BJ (cell line): ENCODE measurements at regions of chrX and their contacts with region 1.

Region 1: DNA sequence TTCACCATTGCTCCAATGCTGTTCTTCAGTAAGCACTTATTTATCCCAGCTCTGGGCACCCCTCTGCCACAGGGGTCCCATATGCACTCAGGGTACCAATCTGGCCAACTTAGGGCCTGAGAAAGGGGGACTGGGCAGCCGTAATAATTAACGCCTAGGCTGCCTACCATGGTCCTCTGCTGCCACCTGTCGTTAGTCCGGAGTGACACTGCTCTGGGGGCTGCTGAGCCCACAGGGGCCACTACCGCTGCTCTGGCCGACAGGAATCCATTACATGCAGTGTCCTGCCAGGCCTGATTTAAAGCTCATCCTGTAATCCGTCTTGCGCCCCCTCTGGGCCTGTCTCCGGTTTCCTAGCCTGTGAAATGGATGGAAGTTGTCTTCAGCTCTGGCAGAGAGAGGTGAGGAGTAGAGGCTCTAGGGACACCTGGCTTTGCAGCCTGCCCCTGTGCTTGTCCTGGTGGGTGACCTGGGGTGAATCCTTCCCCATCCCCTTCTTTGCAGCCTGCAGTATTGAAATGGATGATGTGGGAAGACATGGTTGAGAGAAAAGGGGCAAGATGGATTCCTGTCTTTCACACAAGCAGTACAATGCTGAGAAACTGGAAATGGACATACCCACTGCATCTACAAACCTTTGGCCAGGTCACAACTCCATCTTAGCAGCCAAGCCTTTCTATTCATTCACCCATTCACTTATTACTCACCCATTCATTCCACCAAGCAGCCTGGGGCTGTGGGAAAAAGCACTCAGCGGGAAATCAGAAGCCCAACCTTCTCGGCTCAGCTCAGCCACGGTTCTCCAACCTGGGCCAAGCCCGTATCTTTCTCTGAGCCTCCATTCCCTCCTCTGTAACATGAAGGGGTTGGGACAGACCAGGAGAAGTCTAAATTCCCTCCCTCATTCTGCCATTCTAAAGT is 116.3 kb upstream of the NALF2 start:
- DNase-seq: no peak
- H3K4me3 ChIP-seq: no peak overlapping the region
- H3K27me3 ChIP-seq: peaks cover 1% of the 10 kb centered on the region
- CTCF ChIP-seq: peak; percentile 72

Region 2: GRCh38 chrX:68822641-68823410 is 565.0 kb before region 1 on chrX:
- CTCF ChIA-PET with region 1: interaction called, 33 read pairs
- POLR2A ChIA-PET with region 1: no interaction called
- DNase-seq: no peak
- H3K4me3 ChIP-seq: no peak overlapping the region
- H3K27me3 ChIP-seq: no peaks in the 10 kb centered on the region
- CTCF ChIP-seq: peak; percentile 61

Region 3: GRCh38 chrX:68828740-68829552 is 558.9 kb before region 1 on chrX and contains the start of gene EFNB1:
- CTCF ChIA-PET with region 1: interaction called, 33 read pairs
- POLR2A ChIA-PET with region 1: no interaction called
- DNase-seq: peak; percentile 78
- H3K4me3 ChIP-seq: peak within 1 kb of the TSS; percentile 68
- H3K27me3 ChIP-seq: no peaks in the 10 kb centered on the region
- CTCF ChIP-seq: no peak
- polyA plus RNA-seq, gene EFNB1: 10.8 and 15.2 TPM in 2 replicates

Region 4: DNA sequence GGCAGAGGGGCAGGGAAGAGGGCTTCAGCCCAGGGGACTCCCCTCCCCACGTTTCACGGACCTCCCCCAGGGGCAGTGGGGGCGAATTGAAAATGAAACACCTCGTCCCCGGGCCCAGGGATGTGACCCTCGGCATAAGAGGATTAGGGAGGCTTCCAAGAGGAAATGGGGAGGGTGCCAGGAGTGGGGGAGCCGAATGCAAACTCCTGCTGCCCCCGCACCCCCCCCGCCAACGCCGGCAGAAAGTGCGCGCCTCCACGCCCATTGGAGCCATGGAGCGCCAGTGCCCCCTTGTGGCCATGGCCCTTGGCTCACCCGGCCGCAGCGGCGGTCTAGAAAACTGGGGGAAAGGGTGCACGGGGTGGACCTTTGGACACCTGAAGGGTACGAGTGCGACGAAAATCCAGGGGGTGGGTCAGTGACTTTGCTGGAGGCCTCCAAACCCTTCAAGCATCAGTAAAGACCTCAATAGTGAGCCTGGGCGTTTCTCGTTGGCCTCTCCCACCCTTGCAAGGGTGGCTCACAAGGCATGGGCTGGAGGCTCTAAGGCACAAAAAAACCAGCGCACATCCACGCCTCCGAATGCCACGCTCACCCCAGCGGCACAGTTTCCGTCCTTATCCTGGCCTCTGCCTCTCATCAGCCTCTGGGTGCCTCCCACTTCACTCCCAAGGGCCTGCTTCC is 101.8 kb before region 1 on chrX:
- CTCF ChIA-PET with region 1: interaction called, 28 read pairs
- POLR2A ChIA-PET with region 1: no interaction called
- DNase-seq: no peak
- H3K4me3 ChIP-seq: peak overlapping the region; percentile 37
- H3K27me3 ChIP-seq: no peaks in the 10 kb centered on the region
- CTCF ChIP-seq: peak; percentile 88

Region 5: GRCh38 chrX:69362856-69363255 is 25.0 kb before region 1 on chrX:
- CTCF ChIA-PET with region 1: interaction called, 18 read pairs
- POLR2A ChIA-PET with region 1: no interaction called
- DNase-seq: peak; percentile 18
- H3K4me3 ChIP-seq: no peak overlapping the region
- H3K27me3 ChIP-seq: no peaks in the 10 kb centered on the region
- CTCF ChIP-seq: no peak

Region 6: GRCh38 chrX:69374569-69374968 is 13.3 kb before region 1 on chrX:
- CTCF ChIA-PET with region 1: interaction called, 16 read pairs
- POLR2A ChIA-PET with region 1: no interaction called
- DNase-seq: no peak
- H3K4me3 ChIP-seq: no peak overlapping the region
- H3K27me3 ChIP-seq: no peaks in the 10 kb centered on the region
- CTCF ChIP-seq: no peak

Region 7: GRCh38 chrX:69615779-69616456 is 228.1 kb after region 1 on chrX and contains the start of gene EDA:
- CTCF ChIA-PET with region 1: no interaction called
- POLR2A ChIA-PET with region 1: no interaction called
- DNase-seq: no peak
- H3K4me3 ChIP-seq: peak within 1 kb of the TSS; percentile 43
- H3K27me3 ChIP-seq: peaks cover 6% of the 10 kb centered on the region
- CTCF ChIP-seq: no peak
- polyA plus RNA-seq, gene EDA: 0.06 and 0.09 TPM in 2 replicates